Activated CD4-positive, alpha-beta T cell treated with anti-CD3 and anti-CD28 coated beads for 36 hours (primary cell): ENCODE measurements at regions of chr10 and their contacts with region 1.

Region 1: DNA sequence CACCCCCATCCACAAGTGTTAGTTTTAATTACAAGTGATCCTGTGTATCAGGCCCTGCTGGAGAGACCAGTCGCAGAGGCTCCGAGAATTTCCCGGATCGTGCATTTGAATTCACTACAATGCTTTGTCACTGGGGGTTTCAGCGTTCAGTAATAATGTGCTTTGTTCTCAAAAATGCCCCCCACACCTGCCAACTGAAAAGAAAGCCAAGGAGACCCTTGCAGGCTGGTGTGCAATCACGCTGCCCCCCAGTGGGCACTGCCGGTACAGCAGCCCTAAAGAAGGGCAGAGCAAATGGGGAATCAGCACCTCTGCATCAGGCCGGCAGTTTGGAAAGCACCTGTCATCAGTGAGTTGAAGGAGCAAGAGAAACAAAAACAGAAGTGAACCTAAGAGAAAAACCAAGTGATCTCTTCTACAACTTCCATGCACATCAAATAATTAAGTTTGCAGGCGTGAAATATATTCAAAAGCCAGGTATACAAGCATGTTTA is 177.6 kb downstream of the PARD3 start:
- DNase-seq: peak; percentile 82
- ATAC-seq: peak; percentile 76
- H3K4me3 Mint-ChIP-seq: no peak overlapping the region
- H3K27ac Mint-ChIP-seq: no peak overlapping the region
- H3K4me1 Mint-ChIP-seq: peaks cover 13% of the 10 kb centered on the region
- H3K27me3 Mint-ChIP-seq: peaks cover 4% of the 10 kb centered on the region

Region 2: DNA sequence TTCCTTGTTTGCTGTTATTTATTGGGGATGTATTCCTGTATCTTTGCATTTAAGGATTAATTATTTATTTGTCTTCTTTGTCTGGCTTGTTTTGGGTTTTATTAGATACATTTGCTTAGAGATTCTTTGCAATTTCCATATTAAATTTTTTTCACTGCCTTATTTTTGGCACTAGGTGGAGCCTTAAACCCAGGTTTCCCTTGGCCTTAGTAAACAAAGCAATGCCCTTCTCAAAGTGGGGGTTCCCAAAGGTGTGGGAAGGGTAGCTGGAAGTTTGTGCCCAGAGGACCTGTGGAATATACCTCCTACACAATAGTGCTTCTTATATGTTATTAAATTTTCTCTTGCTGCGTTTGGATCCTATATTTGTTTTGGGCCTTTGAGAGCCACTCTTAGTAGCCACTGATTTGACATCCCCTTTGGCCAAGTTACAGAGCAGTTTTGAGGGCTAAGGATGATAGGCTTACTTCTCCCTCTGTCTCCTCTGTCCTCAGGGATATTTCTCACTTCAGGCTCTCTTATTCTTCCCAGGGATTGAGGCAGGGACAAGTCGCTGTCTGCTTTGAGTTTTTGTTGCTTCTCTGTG is 1841.8 kb before region 1 on chr10:
- CTCF ChIA-PET with region 1: no interaction called
- POLR2A ChIA-PET with region 1: no interaction called
- intact Hi-C with region 1: loop called in 1 of 2 experiments (anchors 10 kb)
- DNase-seq: no peak
- ATAC-seq: no peak
- H3K4me3 Mint-ChIP-seq: no peak overlapping the region
- H3K27ac Mint-ChIP-seq: no peak overlapping the region
- H3K4me1 Mint-ChIP-seq: peaks cover 2% of the 10 kb centered on the region
- H3K27me3 Mint-ChIP-seq: no peaks in the 10 kb centered on the region

Region 3: DNA sequence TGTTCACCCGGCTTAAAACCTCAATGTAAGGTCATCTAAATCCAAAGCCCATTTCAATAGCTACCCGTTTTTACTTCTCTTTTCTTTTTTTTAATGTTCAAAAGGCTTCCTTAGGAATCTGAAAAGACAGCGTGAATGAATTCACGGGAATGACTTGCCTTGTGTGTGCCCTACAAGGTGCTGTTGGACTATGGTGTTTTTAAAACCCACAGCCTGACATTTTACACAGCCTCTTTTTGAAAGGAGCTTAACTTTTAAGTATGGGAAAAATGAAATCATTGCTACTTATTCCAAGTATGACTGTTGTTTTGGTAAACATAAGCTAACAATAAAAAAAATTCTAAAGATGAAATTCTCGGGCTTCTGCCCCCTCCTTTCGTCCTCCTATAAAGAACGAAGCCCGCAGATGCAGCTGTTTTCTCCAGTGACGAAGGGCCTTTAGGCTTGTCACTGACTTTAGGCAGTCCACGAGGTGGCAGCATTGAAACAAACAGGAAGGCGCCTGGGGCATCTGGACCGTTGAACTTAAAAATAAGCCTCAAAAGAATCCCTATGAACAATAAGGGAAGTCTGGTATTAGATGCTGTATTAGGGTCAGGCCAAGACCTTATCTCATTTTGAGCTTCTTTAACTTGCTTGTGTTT is 1444.3 kb before region 1 on chr10:
- CTCF ChIA-PET with region 1: interaction called, 21 read pairs
- POLR2A ChIA-PET with region 1: no interaction called
- intact Hi-C with region 1: loop called (anchors 1 to 5 kb)
- DNase-seq: peak; percentile 88
- ATAC-seq: peak; percentile 88
- H3K4me3 Mint-ChIP-seq: no peak overlapping the region
- H3K27ac Mint-ChIP-seq: no peak overlapping the region
- H3K4me1 Mint-ChIP-seq: no peaks in the 10 kb centered on the region
- H3K27me3 Mint-ChIP-seq: peaks cover 26% of the 10 kb centered on the region

Region 4: GRCh38 chr10:34081948-34082347 is 555.5 kb before region 1 on chr10:
- CTCF ChIA-PET with region 1: no interaction called
- POLR2A ChIA-PET with region 1: no interaction called
- intact Hi-C with region 1: loop called in 1 of 2 experiments (anchors 5 kb)
- DNase-seq: no peak
- ATAC-seq: no peak
- H3K4me3 Mint-ChIP-seq: no peak overlapping the region
- H3K27ac Mint-ChIP-seq: no peak overlapping the region
- H3K4me1 Mint-ChIP-seq: no peaks in the 10 kb centered on the region
- H3K27me3 Mint-ChIP-seq: no peaks in the 10 kb centered on the region

Region 5: DNA sequence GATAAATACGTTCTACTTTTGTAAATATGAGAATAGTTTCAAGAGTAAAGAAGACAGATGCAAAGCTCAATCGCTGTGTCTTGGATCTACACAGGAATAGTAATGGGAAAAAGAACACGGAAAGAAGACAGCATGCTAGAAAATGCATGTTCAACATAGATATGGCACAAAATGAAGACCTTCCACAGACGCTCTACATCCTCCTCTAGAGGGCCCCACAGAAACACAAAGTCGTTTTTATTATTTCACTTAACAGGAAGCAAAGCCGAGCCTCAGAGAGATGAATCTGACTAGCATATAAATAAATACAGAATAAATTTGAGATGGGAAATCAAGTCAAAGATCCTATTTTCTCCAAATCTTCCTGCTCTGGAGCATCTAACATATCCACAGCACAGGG is 114.9 kb before region 1 on chr10:
- CTCF ChIA-PET with region 1: interaction called, 12 read pairs
- POLR2A ChIA-PET with region 1: no interaction called
- intact Hi-C with region 1: loop called (anchors 1 to 2 kb)
- DNase-seq: no peak
- ATAC-seq: no peak
- H3K4me3 Mint-ChIP-seq: no peak overlapping the region
- H3K27ac Mint-ChIP-seq: no peak overlapping the region
- H3K4me1 Mint-ChIP-seq: no peaks in the 10 kb centered on the region
- H3K27me3 Mint-ChIP-seq: peaks cover 12% of the 10 kb centered on the region

Region 6: DNA sequence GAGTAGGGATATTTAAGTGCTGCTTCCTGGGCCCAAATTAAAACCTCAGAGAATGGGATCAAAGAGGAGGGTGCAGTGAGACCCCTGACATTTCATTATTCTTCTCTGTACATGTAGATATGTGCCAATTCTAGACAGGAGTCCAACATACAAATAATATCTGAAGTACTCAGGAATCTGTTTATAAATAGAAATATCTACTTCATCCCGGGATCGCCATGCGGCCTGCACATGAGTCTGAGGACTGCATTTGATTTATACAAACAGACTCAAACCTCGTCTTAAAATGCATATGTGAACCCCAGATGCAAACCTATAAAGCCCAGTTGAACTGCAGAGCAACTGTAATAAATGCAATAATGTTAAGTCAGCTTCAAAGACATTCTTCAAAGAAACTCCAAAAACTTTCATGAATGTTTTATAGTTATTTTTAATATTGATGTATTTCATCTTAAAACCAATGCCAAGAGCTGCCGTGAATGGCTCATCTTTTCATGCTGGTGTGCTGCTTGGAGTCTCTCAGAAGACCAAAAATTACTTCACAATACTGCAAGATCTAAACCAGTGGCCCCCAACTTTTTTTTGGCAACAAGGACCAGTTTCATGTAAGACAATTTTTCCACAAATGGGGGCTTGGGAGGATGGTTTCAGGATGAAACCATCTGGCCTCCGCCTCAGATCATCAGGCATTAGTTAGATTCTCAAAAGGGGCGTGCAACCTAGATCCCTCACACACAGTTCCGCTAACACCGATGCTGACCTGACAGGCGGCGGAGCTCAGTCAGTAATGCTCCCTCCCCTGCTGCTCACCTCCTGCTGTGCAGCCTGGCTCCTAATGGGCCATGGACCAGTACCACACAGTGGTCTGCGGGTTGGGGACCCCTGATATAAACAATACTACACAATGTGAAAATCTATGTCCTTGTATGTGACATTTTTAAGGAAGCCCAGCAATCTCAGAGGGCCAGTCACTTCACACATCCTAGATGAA is 10.7 kb after region 1 on chr10:
- CTCF ChIA-PET with region 1: interaction called, 20 read pairs
- POLR2A ChIA-PET with region 1: no interaction called
- intact Hi-C with region 1: no loop called
- DNase-seq: no peak
- ATAC-seq: no peak
- H3K4me3 Mint-ChIP-seq: no peak overlapping the region
- H3K27ac Mint-ChIP-seq: no peak overlapping the region
- H3K4me1 Mint-ChIP-seq: no peaks in the 10 kb centered on the region
- H3K27me3 Mint-ChIP-seq: peaks cover 2% of the 10 kb centered on the region

Region 7: GRCh38 chr10:34967335-34967880 is 329.9 kb after region 1 on chr10:
- CTCF ChIA-PET with region 1: no interaction called
- POLR2A ChIA-PET with region 1: no interaction called
- intact Hi-C with region 1: no loop called
- DNase-seq: no peak
- ATAC-seq: no peak
- H3K4me3 Mint-ChIP-seq: no peak overlapping the region
- H3K27ac Mint-ChIP-seq: no peak overlapping the region
- H3K4me1 Mint-ChIP-seq: no peaks in the 10 kb centered on the region
- H3K27me3 Mint-ChIP-seq: peaks cover 5% of the 10 kb centered on the region